Breast epithelium (tissue), 4 donors: ENCODE measurements at regions of chr4 and their contacts with region 1.

Region 1: GRCh38 chr4:13559413-13559812 is 15.1 kb upstream of the NKX3-2 start:
- DNase-seq: no peak
- H3K4me3 ChIP-seq: no peak overlapping the region
- H3K27ac ChIP-seq: no peak overlapping the region
- H3K4me1 ChIP-seq: no peaks in the 10 kb centered on the region
- H3K27me3 ChIP-seq: no peaks in the 10 kb centered on the region
- CTCF ChIP-seq: no peak
- POLR2A ChIP-seq: no peak

Region 2: GRCh38 chr4:13202701-13203100 is 356.7 kb before region 1 on chr4:
- intact Hi-C with region 1: loop called (anchors 5 kb)
- DNase-seq: no peak
- H3K4me3 ChIP-seq: no peak overlapping the region
- H3K27ac ChIP-seq: no peak overlapping the region
- H3K4me1 ChIP-seq: no peaks in the 10 kb centered on the region
- H3K27me3 ChIP-seq: no peaks in the 10 kb centered on the region
- CTCF ChIP-seq: no peak
- POLR2A ChIP-seq: no peak

Region 3: DNA sequence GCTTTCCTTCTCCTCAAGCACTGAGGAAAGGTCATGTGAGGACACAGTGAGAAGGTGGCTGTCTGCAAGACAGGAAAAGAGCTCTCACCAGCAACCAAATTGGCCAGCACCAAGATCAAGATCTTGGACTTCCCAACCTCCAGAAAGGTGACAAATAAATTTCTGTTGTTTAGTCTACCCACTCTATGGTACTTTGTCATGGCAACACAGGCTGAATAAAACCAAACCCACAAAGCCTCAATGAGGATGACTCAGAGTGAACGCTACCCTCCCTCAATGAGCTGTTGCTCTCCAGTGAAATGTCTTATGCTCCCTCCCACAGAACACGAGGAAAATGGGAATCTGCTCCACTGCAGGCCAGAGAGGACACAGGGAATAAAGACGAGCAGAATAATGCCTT is 319.3 kb before region 1 on chr4:
- intact Hi-C with region 1: no loop called
- DNase-seq: no peak
- H3K4me3 ChIP-seq: no peak overlapping the region
- H3K27ac ChIP-seq: no peak overlapping the region
- H3K4me1 ChIP-seq: no peaks in the 10 kb centered on the region
- H3K27me3 ChIP-seq: no peaks in the 10 kb centered on the region
- CTCF ChIP-seq: no peak
- POLR2A ChIP-seq: no peak

Region 4: DNA sequence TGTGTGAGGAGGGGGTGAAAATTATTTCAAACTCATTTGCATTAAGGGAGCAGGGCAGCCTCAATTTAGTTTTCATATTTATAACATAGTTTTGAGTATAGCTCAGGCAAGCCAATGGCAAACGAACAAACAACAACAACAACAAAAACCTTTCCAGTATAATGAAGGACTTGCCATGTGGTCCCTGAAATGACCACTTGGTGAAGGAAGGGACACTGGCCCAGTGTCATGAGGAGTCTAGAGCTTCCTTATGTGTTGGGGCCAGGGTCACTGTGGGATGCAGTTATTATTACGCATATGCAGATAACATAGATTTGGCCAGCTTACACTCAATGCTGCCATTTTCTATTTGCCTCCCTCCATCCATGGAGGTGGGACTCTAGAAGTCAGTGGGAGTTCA is 38.4 kb before region 1 on chr4:
- intact Hi-C with region 1: no loop called
- DNase-seq: no peak
- H3K4me3 ChIP-seq: no peak overlapping the region
- H3K27ac ChIP-seq: no peak overlapping the region
- H3K4me1 ChIP-seq: no peaks in the 10 kb centered on the region
- H3K27me3 ChIP-seq: peaks cover 3 to 50% of the 10 kb centered on the region in 2 donors
- CTCF ChIP-seq: no peak
- POLR2A ChIP-seq: no peak

Region 5: GRCh38 chr4:13601048-13601447 is 41.6 kb after region 1 on chr4:
- intact Hi-C with region 1: no loop called
- DNase-seq: no peak
- H3K4me3 ChIP-seq: no peak overlapping the region
- H3K27ac ChIP-seq: no peak overlapping the region
- H3K4me1 ChIP-seq: no peaks in the 10 kb centered on the region
- H3K27me3 ChIP-seq: no peaks in the 10 kb centered on the region
- CTCF ChIP-seq: no peak
- POLR2A ChIP-seq: no peak

Region 6: DNA sequence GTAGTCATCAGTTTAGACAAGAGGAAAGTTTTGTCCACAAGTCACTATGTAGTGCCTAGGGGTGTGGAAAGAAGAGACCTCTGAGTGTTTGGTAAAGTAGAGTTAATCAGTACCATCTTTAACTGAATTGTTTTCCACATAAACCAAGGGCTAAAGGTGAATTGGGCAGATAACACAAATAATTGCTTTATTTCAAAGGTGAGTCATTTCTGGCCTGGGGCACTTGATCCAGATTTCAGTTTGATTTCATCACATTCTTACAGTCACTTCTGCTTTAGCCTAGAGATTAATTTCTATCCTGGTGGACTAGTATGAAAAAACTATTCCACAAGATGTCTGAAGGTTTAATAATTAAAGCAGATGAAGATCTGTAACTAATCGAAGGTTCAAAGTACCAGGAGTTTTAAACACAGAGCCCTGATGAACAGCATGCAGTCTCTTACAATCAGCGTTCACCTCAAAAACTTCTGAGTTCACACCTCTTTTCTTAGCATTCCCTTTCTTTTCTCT is 142.6 kb after region 1 on chr4:
- intact Hi-C with region 1: no loop called
- DNase-seq: no peak
- H3K4me3 ChIP-seq: no peak overlapping the region
- H3K27ac ChIP-seq: peak overlapping the region; percentile 36 to 54
- H3K4me1 ChIP-seq: peaks cover 0 to 8% of the 10 kb centered on the region in 2 donors
- H3K27me3 ChIP-seq: no peaks in the 10 kb centered on the region
- CTCF ChIP-seq: no peak
- POLR2A ChIP-seq: no peak